AG04450 (cell line): ENCODE measurements at regions of chr6 and their contacts with region 1.

Region 1: GRCh38 chr6:722077-722524 is 29.2 kb upstream of the EXOC2 start:
- DNase-seq: peak; percentile 76
- H3K4me3 ChIP-seq: no peak overlapping the region
- H3K27ac ChIP-seq: no peak overlapping the region
- H3K27me3 ChIP-seq: peaks cover 3% of the 10 kb centered on the region
- CTCF ChIP-seq: peak; percentile 98

Region 2: GRCh38 chr6:593139-593906 is 128.8 kb before region 1 on chr6:
- CTCF ChIA-PET with region 1: interaction called, 59 read pairs
- POLR2A ChIA-PET with region 1: interaction called, 3 read pairs
- DNase-seq: no peak
- H3K4me3 ChIP-seq: no peak overlapping the region
- H3K27ac ChIP-seq: no peak overlapping the region
- H3K27me3 ChIP-seq: no peaks in the 10 kb centered on the region
- CTCF ChIP-seq: peak; percentile 64

Region 3: GRCh38 chr6:624979-625378 is 97.1 kb before region 1 on chr6:
- CTCF ChIA-PET with region 1: interaction called, 11 read pairs
- POLR2A ChIA-PET with region 1: no interaction called
- DNase-seq: peak; percentile 15
- H3K4me3 ChIP-seq: no peak overlapping the region
- H3K27ac ChIP-seq: no peak overlapping the region
- H3K27me3 ChIP-seq: no peaks in the 10 kb centered on the region
- CTCF ChIP-seq: peak; percentile 42

Region 4: GRCh38 chr6:642805-643204 is 79.3 kb before region 1 on chr6:
- CTCF ChIA-PET with region 1: no interaction called
- POLR2A ChIA-PET with region 1: no interaction called
- DNase-seq: no peak
- H3K4me3 ChIP-seq: no peak overlapping the region
- H3K27ac ChIP-seq: no peak overlapping the region
- H3K27me3 ChIP-seq: no peaks in the 10 kb centered on the region
- CTCF ChIP-seq: no peak

Region 5: DNA sequence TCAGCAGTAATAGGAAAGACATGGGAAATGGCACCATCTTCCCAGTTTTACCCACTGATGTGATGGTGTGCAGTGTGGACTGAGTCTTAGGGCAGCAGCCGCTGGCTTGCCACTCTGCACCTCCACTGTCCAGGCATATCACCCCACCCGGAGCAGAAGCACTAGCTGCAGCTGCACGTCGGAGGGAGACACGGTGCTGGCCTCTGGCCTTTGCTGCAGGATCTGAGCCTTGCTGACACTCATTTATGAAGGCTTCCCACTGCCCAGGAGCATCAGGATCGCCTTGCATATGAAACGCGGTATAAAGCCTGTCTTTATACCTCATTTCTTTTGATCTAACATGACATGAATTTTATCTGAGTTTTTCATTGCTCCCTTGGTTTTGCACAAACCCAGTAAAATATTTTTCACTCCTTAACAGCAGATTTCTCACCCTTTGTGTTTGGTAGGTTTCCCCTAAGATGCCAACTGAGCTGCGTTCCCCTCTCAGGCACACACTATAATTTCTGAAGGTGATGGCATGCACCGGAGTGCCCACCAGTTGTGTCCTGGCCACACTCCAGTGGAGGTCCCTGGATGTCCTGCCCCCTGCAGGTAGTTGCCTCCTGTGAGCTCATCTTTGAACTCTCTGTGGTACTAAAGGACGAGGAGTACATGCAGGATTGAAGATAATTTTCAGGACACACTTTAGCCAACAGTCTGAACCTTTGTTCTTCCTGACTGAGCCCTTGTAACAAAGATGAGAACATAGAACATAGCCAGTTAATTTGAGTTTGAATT is 20.2 kb before region 1 on chr6:
- CTCF ChIA-PET with region 1: interaction called, 49 read pairs
- POLR2A ChIA-PET with region 1: no interaction called
- DNase-seq: no peak
- H3K4me3 ChIP-seq: no peak overlapping the region
- H3K27ac ChIP-seq: no peak overlapping the region
- H3K27me3 ChIP-seq: no peaks in the 10 kb centered on the region
- CTCF ChIP-seq: no peak

Region 6: GRCh38 chr6:741410-742339 is 19.6 kb after region 1 on chr6:
- CTCF ChIA-PET with region 1: interaction called, 15 read pairs
- POLR2A ChIA-PET with region 1: no interaction called
- DNase-seq: no peak
- H3K4me3 ChIP-seq: no peak overlapping the region
- H3K27ac ChIP-seq: no peak overlapping the region
- H3K27me3 ChIP-seq: no peaks in the 10 kb centered on the region
- CTCF ChIP-seq: no peak